Activated CD4-positive, alpha-beta T cell treated with anti-CD3 and anti-CD28 coated beads, Interleukin-2, amount 10 ng/mL, durations not matched to agents 24 days and 14 days (primary cell): ENCODE measurements at regions of chr2 and their contacts with region 1.

Region 1: DNA sequence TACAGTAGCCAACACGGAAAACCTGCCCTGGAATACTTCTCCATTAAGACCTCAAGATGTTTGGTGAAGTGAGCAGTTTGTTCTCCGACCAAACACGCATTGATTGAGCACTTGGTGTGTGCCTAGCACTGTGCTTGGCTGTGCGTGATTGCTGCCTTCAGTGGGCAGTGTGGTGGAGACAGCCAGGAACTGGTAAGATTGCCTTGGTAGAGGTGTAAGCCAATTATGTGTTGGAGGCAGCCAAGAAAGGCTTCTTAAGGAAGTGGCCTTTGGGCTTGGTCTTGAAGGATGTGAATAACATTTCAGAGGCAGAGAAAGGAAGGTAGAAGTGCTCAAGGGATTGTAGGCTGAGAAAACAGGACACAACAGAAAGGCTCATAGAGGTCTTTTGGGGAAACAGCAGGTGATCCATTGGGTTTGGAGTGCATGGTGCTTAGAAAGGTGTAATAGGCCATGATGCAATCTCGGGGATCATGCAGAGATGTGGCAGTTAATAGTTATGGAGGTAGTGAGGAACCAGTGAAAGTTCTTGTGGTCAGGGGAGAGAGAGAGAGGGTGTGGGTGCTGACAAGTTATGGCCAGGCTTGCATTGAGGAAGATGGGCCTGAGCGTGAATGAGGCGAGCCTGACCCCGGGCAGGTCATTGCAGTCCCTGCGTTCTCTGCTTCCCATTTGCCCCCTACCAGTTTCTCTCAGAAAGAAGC is 6.3 kb downstream of the B3GNT2 start:
- DNase-seq: peak; percentile 67
- H3K4me3 Mint-ChIP-seq: peak overlapping the region; percentile 89
- H3K27ac Mint-ChIP-seq: peak overlapping the region; percentile 50
- H3K4me1 Mint-ChIP-seq: peaks cover 70% of the 10 kb centered on the region
- H3K27me3 Mint-ChIP-seq: no peaks in the 10 kb centered on the region

Region 2: GRCh38 chr2:62216616-62217015 is 14.4 kb after region 1 on chr2:
- intact Hi-C with region 1: loop called (anchors 2 kb)
- DNase-seq: no peak
- H3K4me3 Mint-ChIP-seq: no peak overlapping the region
- H3K27ac Mint-ChIP-seq: peak overlapping the region; percentile 32
- H3K4me1 Mint-ChIP-seq: peaks cover 68% of the 10 kb centered on the region
- H3K27me3 Mint-ChIP-seq: no peaks in the 10 kb centered on the region

Region 3: DNA sequence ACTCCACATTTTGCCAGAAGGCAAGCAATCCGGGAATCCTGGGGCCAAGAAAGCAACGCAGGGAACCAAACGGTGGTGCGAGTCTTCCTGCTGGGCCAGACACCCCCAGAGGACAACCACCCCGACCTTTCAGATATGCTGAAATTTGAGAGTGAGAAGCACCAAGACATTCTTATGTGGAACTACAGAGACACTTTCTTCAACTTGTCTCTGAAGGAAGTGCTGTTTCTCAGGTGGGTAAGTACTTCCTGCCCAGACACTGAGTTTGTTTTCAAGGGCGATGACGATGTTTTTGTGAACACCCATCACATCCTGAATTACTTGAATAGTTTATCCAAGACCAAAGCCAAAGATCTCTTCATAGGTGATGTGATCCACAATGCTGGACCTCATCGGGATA is 20.5 kb after region 1 on chr2:
- intact Hi-C with region 1: loop called (anchors 2 kb)
- DNase-seq: peak; percentile 66
- H3K4me3 Mint-ChIP-seq: peak overlapping the region; percentile 30
- H3K27ac Mint-ChIP-seq: peak overlapping the region; percentile 65
- H3K4me1 Mint-ChIP-seq: peaks cover 55% of the 10 kb centered on the region
- H3K27me3 Mint-ChIP-seq: no peaks in the 10 kb centered on the region

Region 4: DNA sequence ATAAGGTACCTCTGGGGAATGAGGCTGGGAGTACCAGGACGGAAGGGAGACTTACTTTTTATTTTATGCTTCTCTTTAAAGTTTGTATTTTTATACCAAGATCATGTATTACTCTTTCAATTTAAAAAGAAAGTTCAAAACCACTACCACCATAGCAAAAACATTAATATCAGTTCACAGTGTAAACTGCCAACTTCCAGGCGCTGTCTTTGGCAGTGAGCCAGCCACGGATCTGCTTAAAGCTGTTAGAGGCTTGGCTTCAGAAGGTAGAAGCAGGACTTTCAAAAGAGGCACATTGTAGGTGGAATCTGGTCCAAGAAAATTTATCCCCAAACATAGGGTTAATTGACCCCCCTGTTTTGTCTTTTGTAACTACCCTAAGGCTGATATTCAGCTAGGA is 68.6 kb after region 1 on chr2:
- intact Hi-C with region 1: no loop called
- DNase-seq: no peak
- H3K4me3 Mint-ChIP-seq: no peak overlapping the region
- H3K27ac Mint-ChIP-seq: no peak overlapping the region
- H3K4me1 Mint-ChIP-seq: no peaks in the 10 kb centered on the region
- H3K27me3 Mint-ChIP-seq: no peaks in the 10 kb centered on the region

Region 5: GRCh38 chr2:62287899-62288880 is 86.0 kb after region 1 on chr2:
- intact Hi-C with region 1: no loop called
- DNase-seq: no peak
- H3K4me3 Mint-ChIP-seq: no peak overlapping the region
- H3K27ac Mint-ChIP-seq: no peak overlapping the region
- H3K4me1 Mint-ChIP-seq: peaks cover 3% of the 10 kb centered on the region
- H3K27me3 Mint-ChIP-seq: no peaks in the 10 kb centered on the region